ENCODE measurements at regions of chr2 and their contacts with region 1.

Region 1: GRCh38 chr2:233251306-233252116 is at the start of gene ATG16L1:
- DNase-seq: peak; percentile 98
- H3K4me3 ChIP-seq: peak within 1 kb of the TSS; percentile 96
- H3K27ac ChIP-seq: peak within 1 kb of the TSS; percentile 84
- H3K4me1 ChIP-seq: peaks cover 4% of the 10 kb centered on the region
- H3K27me3 ChIP-seq: no peaks in the 10 kb centered on the region
- CTCF ChIP-seq: peak; percentile 99
- total RNA-seq, gene ATG16L1: 38.2 and 43.2 TPM in 2 replicates

Region 2: DNA sequence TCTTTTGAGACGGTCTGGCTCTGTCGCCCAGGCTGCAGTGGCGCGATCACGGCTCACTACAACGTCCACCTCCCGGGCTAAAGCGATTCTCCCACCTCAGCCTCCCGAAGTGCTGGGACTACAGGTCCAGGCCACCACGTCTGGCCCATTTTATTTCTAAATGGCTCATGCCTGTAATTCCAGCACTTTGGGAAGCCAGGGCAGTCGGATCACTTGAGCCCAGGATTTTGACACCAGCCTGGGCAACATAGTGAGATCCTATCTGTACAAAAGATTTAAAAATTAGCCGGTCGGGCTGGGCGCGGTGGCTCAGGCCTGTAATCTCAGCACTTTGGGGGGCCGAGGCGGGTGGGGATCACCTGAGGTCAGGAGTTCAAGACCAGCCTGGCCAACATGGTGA is 644.5 kb before region 1 on chr2:
- CTCF ChIA-PET with region 1: no interaction called
- POLR2A ChIA-PET with region 1: no interaction called
- intact Hi-C with region 1: loop called (anchors 2 kb)
- DNase-seq: no peak
- H3K4me3 ChIP-seq: no peak overlapping the region
- H3K27ac ChIP-seq: no peak overlapping the region
- H3K4me1 ChIP-seq: no peaks in the 10 kb centered on the region
- H3K27me3 ChIP-seq: no peaks in the 10 kb centered on the region
- CTCF ChIP-seq: no peak

Region 3: DNA sequence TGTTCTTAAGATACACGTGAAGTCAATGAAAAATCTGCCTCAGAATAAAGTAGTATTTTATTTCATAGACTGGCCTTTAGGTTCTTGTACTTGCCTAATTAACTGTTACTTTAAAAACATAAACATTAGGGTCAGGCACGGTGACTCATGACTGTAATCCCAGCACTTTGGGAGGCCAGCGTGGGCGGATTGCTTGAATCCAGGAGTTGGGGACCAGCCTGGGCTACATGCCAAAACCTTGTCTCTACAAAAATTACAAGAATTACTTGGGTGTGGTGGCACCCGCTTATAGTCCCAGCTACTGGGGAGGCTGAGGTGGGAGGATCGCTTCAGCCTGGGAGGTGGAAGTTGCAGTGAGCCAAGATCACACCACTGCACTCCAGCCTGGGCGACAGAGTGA is 397.4 kb before region 1 on chr2:
- CTCF ChIA-PET with region 1: no interaction called
- POLR2A ChIA-PET with region 1: no interaction called
- intact Hi-C with region 1: loop called (anchors 5 kb)
- DNase-seq: peak; percentile 74
- H3K4me3 ChIP-seq: no peak overlapping the region
- H3K27ac ChIP-seq: no peak overlapping the region
- H3K4me1 ChIP-seq: peaks cover 10% of the 10 kb centered on the region
- H3K27me3 ChIP-seq: no peaks in the 10 kb centered on the region
- CTCF ChIP-seq: no peak

Region 4: DNA sequence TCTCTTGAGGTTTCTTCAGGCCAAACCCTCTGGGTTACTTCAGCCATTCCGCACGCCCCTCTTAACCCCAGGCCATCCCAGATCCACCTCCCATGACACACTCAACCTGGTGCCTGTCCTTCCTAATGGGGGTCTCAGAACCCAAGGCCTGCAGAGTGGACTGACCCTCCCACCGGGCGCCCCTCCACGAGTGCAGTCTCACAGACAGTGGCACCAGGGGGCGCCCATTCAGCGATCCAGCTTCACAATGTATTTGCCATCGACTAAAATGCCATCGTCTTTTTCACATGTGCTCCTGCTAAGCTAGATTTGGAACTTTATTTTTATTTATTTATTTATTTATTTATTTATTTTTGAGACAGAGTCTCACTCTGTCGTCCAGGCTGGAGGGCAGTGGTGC is 152.9 kb before region 1 on chr2:
- CTCF ChIA-PET with region 1: interaction called, 9 read pairs
- POLR2A ChIA-PET with region 1: no interaction called
- intact Hi-C with region 1: loop called (anchors 1 kb)
- DNase-seq: peak; percentile 68
- H3K4me3 ChIP-seq: no peak overlapping the region
- H3K27ac ChIP-seq: no peak overlapping the region
- H3K4me1 ChIP-seq: no peaks in the 10 kb centered on the region
- H3K27me3 ChIP-seq: peaks cover 3% of the 10 kb centered on the region
- CTCF ChIP-seq: peak; percentile 81

Region 5: GRCh38 chr2:233443468-233444183 is 192.1 kb after region 1 on chr2:
- CTCF ChIA-PET with region 1: no interaction called
- POLR2A ChIA-PET with region 1: no interaction called
- intact Hi-C with region 1: loop called (anchors 2 kb)
- DNase-seq: peak; percentile 86
- H3K4me3 ChIP-seq: no peak overlapping the region
- H3K27ac ChIP-seq: peak overlapping the region; percentile 43
- H3K4me1 ChIP-seq: peaks cover 3% of the 10 kb centered on the region
- H3K27me3 ChIP-seq: no peaks in the 10 kb centered on the region
- CTCF ChIP-seq: peak; percentile 85

Measured in A673 (cell line).